ENCODE measurements at regions of chr12 and their contacts with region 1.

Region 1: DNA sequence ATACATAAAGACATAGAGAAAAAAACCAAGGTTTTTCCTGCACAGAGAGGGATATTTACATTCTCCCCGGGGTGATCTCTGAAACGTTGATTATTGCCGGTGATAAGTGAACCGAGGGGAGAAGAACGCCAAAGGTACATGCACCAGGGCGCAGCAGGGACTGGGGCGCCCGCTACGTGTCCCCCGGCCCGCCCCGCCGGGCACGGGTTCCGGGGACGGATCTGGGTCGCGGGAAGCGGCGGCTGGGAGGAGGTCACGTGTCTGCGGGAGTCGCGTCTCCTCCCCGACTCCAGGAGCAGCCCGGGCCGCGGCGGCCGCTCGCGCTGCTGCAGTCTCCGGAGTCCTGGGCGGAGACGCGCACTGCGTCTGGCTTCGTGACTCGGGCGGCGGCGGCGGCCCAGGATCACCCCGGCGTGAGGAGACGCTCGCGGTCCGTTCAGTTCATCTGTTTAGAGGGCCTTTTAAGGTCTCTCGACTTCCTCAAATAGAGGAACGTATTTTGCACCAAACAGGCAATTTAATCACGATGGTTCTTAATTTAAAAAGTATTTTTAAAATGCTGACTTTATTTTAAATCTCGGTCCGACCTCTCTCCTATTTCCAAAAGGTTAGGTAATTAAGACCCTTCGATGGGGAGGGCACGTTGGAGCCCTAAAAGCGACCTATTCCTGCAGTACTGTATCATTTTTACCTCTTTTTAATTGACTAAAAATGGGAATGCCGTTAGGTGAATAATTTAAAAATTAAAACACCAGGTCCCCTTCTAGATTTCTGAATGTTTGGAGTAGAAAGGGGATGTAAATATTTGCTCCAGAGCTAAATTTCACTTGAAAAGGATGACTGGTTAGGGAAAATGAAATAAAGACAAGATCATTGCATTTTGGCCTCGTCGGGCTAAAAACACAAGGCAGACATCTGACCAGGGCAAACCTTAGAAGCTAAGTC is 1.8 kb upstream of the BHLHE41 start:
- DNase-seq: peak; percentile 84 to 93 (median 88)
- ATAC-seq: peak; percentile 67 to 76 (median 70)
- H3K4me3 ChIP-seq: peak overlapping the region; percentile 22 to 71 (median 55)
- H3K27ac ChIP-seq: peak overlapping the region; percentile 91 to 99 (median 94)
- H3K4me1 ChIP-seq: peaks cover 0 to 12% (median 6%) of the 10 kb centered on the region in 3 donors
- H3K27me3 ChIP-seq: no peaks in the 10 kb centered on the region
- CTCF ChIP-seq: no peak

Region 2: DNA sequence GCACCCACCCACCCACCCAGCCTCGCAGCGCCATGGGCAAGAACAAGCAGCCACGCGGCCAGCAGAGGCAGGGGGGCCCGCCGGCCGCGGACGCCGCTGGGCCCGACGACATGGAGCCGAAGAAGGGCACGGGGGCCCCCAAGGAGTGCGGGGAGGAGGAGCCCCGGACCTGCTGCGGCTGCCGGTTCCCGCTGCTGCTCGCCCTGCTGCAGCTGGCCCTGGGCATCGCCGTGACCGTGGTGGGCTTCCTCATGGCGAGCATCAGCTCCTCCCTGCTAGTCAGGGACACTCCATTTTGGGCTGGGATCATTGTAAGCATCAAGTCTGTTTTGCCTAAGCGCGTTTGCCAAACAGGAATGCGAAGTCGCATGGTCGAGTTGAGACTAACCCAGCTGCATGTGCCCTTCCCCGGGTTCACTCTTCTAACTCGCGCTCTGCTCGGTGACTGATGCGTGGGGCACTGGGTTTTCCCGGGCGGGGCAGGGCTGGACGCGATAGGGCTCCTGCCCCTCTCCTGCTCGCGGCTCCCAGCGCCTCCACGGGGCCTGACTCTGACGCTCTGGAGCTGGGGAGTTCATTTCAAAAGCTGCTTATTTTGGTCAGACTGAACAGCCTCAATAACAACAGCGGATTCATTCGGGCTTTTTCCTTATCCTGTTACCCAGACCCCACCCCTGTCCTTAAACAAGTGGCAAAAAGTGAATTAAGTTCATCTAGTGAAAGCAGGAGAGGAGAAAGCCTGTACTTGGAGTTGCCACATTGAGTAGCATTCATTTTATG is 69.2 kb after region 1 on chr12:
- intact Hi-C with region 1: loop called in 2 of 3 experiments (anchors 10 kb)
- DNase-seq: peak; percentile 44 to 79 (median 58)
- ATAC-seq: peak; percentile 75 to 88 (median 82)
- H3K4me3 ChIP-seq: peak overlapping the region; percentile 38 to 73 (median 56)
- H3K27ac ChIP-seq: peak overlapping the region; percentile 73 to 88 (median 80)
- H3K4me1 ChIP-seq: peaks cover 0 to 7% (median 0%) of the 10 kb centered on the region in 3 donors
- H3K27me3 ChIP-seq: no peaks in the 10 kb centered on the region
- CTCF ChIP-seq: no peak

Region 3: DNA sequence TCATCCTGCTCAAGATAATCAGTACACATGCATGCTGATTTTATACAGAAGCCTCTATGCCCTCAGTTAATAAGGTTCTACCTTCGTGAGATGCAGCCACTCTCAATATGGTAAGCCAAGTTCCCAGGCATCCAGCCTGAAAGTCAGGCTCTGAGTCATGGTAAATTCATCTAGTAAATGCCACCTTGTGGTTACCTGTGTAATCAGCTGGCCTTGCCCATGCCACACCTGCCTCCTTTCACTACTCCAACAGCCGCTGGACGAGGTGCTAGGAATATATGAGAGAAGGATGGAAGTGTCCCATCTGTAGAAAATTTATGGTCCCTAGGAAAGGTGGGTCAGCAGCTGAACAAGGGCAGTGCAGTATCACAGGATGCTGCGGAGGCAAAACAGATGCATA is 276.0 kb after region 1 on chr12:
- intact Hi-C with region 1: loop called in 2 of 3 experiments (anchors 10 kb)
- DNase-seq: peak; percentile 51 to 79 (median 58)
- ATAC-seq: peak; percentile 96 to 98 (median 98)
- H3K4me3 ChIP-seq: no peak overlapping the region
- H3K27ac ChIP-seq: no peak overlapping the region
- H3K4me1 ChIP-seq: no peaks in the 10 kb centered on the region
- H3K27me3 ChIP-seq: no peaks in the 10 kb centered on the region
- CTCF ChIP-seq: peak; percentile 13 to 39 (median 26)

Measured in pancreas (tissue), 10 donors.